Heart right ventricle (tissue), 16 donors: ENCODE measurements at regions of chr6 and their contacts with region 1.

Region 1: DNA sequence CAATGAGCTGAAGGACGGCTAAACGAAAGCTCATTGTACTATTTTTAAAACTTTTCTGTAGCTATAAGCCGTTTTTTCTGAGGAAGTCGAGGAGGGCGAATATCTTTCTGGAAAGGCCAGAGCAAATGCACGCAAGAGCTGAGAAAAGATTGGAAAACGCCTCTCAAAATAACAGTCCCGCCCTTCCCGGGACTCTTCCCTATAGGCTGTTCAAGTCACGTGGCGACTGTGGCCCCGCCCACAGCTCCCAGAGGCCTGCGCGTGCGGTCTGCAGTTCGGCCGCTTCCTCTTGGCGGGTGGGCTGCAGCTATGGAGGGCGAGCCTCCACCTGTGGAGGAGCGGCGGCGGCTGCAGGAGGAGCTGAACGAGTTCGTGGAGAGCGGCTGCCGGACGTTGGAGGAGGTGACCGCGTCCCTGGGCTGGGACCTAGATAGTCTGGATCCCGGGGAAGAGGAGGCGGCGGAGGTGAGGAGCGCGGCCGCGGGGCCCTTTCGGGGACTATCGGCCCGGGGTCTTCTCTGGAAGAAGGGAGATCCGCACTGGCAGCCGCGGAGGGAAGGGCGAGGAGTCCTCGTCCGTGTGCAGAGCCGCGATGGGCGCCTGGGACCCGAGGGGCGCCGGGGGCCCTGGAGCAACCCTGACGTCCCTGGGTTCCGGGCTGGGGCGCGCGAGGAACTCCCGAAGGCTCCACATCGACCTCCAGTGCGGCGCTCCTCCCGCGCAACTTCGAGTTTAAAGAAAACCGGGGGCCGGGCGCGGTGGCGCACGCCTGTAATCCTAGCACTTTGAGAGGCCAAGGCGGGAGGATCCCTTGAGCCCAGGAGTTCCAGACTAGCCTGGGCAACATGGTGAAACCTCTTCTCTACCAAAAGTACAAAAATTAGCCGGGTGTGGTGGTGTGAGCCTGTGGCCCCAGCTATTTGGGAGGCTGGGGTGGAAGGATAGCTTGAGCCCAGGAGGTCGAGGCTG is at the start of gene SNRNP48:
- DNase-seq: peak; percentile 94 to 96
- ATAC-seq: peak; percentile 98 to 100 (median 99)
- H3K4me3 ChIP-seq: peak within 1 kb of the TSS; percentile 63 to 100 (median 90)
- H3K27ac ChIP-seq: peak within 1 kb of the TSS; percentile 16 to 89 (median 86)
- H3K4me1 ChIP-seq: peaks cover 0 to 56% (median 39%) of the 10 kb centered on the region in 9 donors
- H3K27me3 ChIP-seq: no peaks in the 10 kb centered on the region
- CTCF ChIP-seq: no peak
- total RNA-seq, gene SNRNP48: 9.1 to 21.1 (median 13.1) TPM

Region 2: DNA sequence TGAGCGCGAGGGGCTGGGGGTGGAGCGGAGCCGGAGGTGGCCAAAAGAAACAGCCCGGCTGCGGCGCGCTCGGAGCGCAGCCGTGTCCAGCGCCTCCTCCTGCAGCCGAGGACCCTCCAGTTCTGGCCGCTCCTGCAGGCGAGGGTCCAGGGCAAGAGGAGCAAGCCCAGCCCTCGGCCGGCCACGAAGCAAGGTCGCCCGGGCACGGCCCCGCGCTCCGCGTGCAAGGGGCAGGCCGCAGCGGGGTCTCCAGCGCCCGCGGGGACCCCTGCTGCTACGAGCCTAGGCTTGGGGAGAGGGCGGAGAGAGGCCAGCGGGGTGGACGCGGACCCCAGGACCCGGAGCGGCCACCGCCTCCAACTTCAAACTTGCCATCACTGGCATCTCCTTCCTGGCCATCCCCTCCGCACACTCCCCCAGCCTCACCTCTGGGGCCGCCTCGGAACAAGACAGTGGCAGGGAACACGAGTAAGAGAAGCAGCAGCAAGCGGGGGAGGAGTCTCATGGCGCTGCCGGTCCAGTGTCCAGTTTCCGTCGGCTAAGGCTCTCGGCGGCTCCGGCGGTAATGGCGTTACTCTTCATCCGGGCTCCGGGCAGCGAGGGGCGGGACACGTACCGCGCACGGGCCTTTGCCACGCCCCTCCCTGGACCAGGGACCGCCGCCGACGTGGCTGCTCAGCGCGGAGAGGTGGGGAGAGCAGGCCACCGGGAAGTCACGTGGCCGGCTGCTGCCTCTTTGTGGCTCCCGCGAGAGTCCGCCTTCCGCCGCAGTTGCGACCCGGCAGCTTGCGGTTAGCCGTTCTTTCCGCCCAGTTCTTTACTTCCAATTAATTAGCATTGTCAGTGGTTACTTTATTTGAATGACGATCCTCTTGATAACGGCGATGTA is 277.4 kb before region 1 on chr6 and contains the start of gene SSR1:
- intact Hi-C with region 1: loop called in 2 of 10 experiments (anchors 5 to 10 kb)
- DNase-seq: peak; percentile 97 to 98
- ATAC-seq: peak; percentile 100
- H3K4me3 ChIP-seq: peak within 1 kb of the TSS; percentile 75 to 100 (median 97)
- H3K27ac ChIP-seq: peak within 1 kb of the TSS; percentile 80 to 99 (median 96)
- H3K4me1 ChIP-seq: peaks cover 6 to 55% (median 30%) of the 10 kb centered on the region in 9 donors
- H3K27me3 ChIP-seq: no peaks in the 10 kb centered on the region
- CTCF ChIP-seq: no peak
- total RNA-seq, gene SSR1: 50.9 to 80.5 (median 62.5) TPM

Region 3: DNA sequence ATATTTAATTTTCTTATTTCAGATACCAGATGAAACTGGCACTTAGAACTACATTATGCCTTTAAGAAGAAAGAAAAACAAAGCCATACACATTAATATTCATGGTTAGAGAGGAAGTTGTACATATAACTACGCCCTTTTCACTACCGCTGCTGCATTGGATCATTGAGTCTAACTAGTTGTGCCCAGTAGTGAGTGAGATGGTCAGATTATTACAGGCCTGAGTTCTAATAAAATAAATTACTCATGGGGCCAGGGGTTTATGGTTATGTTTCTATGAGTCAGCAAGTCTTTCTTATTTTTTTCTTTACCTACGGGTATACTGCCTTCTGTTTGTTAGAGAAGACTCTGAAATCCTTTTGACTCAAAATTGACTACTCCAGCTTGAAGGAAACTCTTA is 189.2 kb before region 1 on chr6:
- intact Hi-C with region 1: loop called in 1 of 10 experiments (anchors 10 kb)
- DNase-seq: no peak
- ATAC-seq: no peak
- H3K4me3 ChIP-seq: no peak overlapping the region
- H3K27ac ChIP-seq: no peak overlapping the region
- H3K4me1 ChIP-seq: peaks cover 0 to 3% (median 0%) of the 10 kb centered on the region in 9 donors
- H3K27me3 ChIP-seq: no peaks in the 10 kb centered on the region
- CTCF ChIP-seq: no peak